Mucosa of descending colon (tissue), 3 donors: ENCODE measurements at regions of chr15 and their contacts with region 1.

Region 1: DNA sequence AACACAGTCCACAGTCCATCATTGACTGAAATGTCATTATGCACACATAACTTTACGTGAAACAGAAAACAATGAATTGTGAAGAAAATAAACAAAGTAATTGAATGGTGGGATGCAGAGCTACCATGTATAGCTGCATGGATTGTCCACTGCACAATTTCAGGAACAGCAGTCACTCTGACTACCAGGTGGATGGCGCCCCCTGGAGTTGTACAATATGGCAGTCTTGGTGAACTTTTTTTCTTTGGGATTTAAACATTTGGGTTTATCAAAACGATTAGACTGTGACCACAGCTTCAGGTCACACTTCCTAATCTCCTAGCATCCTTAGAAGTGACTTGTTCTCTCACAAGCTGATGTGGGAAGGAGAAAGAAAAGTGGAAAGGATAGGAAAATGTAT is 48.9 kb upstream of the TCF12 start:
- DNase-seq: peak in 2 of 3 donors; percentile 59 to 82
- ATAC-seq: peak; percentile 51
- H3K4me3 ChIP-seq: no peak overlapping the region
- H3K4me1 ChIP-seq: no peaks in the 10 kb centered on the region
- CTCF ChIP-seq: peak; percentile 16

Region 2: DNA sequence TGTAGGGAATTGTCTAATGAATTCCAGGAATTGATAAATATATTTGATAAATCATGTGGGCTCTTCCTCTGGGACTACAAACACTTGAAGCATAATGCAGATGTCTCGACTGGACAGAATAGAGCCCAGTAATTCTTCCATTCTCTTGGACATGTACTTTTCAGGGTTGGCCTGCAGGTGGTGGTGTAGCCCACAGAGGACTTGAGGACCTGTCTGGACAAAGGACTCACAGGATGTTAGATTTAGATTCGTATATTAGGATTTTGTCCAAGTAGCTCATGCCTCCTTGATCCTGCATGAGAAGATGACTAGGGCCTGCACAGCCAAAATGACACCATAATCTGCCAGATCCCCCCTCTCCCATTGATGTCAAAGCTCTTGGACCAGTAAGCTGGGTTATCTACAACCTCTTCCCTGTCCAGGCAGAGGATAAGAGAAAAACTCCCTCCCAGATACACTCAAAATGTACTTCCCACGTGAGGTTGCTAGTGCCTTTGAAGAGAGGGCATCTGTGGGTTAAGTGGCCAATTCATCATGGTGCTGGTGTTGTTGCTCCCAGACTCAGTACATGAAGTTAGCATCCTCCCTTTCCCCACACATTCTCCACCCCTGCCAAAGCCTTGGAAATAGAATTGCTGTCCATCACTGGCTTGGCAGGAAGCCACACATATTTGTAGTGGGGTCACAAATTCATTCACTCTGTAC is 47.7 kb before region 1 on chr15:
- intact Hi-C with region 1: loop called in 1 of 2 experiments (anchors 5 kb)
- DNase-seq: peak in 2 of 3 donors; percentile 72 to 77
- ATAC-seq: peak; percentile 93
- H3K4me3 ChIP-seq: no peak overlapping the region
- H3K4me1 ChIP-seq: no peaks in the 10 kb centered on the region
- CTCF ChIP-seq: peak; percentile 32

Region 3: DNA sequence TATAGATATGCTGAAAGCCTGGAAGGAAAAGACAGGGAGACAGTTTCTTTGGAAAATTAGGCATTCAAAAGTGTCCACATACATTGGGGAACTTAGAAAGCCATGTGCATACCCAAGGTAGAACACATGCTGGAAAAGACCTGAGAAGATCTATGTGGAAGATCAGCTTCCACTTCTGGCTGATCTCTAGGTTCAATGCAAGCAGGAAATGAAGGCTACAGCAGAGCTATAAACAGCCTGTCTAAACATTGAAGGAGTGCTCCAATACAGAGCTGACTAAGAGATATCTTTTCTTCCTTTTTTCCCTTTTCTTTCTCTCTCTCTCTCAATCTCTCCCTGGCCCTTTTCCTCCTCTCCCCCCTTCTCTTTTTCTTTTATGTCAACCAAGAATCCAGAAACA is 24.7 kb before region 1 on chr15:
- intact Hi-C with region 1: loop called in 1 of 2 experiments (anchors 2 kb)
- DNase-seq: no peak
- ATAC-seq: peak; percentile 95
- H3K4me3 ChIP-seq: no peak overlapping the region
- H3K4me1 ChIP-seq: no peaks in the 10 kb centered on the region
- CTCF ChIP-seq: no peak

Region 4: DNA sequence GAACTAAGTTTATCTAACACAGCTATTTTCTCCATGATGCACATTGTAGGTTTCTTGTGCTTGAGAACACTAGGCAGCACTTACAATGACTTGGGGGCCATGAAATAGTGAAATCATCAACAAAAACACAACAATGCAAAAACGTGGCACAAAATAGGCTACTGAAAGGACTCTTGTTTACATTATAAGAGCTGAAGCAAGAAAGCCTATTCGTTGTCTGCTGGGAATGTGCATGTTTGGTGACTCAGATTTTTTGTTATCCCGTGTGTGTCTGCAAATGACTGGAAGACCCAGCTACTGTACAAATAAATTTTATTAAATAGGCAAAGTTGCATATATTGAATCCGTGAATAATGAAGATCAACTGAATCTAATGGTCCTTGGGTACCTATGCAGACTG is 133.8 kb after region 1 on chr15:
- intact Hi-C with region 1: no loop called
- DNase-seq: no peak
- ATAC-seq: no peak
- H3K4me3 ChIP-seq: no peak overlapping the region
- H3K4me1 ChIP-seq: no peaks in the 10 kb centered on the region
- CTCF ChIP-seq: no peak

Region 5: GRCh38 chr15:57090496-57090859 is 220.9 kb after region 1 on chr15:
- intact Hi-C with region 1: no loop called
- DNase-seq: no peak
- ATAC-seq: no peak
- H3K4me3 ChIP-seq: no peak overlapping the region
- H3K4me1 ChIP-seq: no peaks in the 10 kb centered on the region
- CTCF ChIP-seq: no peak